Naive thymus-derived CD4-positive, alpha-beta T cell (primary cell): ENCODE measurements at regions of chr19 and their contacts with region 1.

Region 1: DNA sequence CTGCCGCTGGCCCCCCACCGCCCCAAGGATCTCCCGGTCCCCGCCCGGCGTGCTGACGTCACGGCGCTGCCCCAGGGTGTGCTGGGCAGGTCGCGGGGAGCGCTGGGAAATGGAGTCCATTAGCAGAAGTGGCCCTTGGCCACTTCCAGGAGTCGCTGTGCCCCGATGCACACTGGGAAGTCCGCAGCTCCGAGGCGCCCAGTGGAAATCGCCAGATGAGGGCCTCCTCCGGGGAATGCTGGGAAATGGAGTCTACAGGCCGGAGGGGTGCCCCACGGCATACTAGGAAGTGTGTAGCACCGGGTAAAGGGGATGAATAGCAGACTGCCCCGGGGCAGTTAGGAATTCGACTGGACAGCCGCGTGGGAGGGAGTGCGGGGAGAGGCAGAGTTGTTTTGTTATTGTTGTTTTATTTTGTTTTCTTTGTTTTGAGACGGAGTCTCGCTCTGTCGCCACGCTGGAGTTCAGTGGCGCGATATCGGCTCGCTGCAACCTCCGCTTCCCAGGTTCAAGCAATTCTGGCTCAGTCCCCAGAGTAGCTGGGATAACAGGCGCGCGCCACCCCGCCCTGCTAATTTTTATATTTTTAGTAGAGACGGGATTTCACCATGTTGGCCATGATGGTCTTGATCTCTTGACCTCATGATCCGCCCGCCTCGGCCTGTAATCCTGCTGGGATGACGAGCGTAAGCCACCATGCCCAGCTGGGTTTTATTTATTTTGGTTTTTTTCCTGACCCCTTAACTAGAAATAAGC is at the start of gene PPP1R12C:
- DNase-seq: peak; percentile 88 to 97 (median 91)
- ATAC-seq: peak; percentile 95
- H3K4me3 ChIP-seq: peak within 1 kb of the TSS; percentile 97
- H3K4me3 Mint-ChIP-seq: peak within 1 kb of the TSS; percentile 96 to 100 (median 98)
- H3K27ac ChIP-seq: peak within 1 kb of the TSS; percentile 74
- H3K27ac Mint-ChIP-seq: peak within 1 kb of the TSS; percentile 91 to 96 (median 95)
- H3K4me1 ChIP-seq: peaks cover 12 to 19% of the 10 kb centered on the region in 2 donors
- H3K4me1 Mint-ChIP-seq: peaks cover 14 to 47% (median 36%) of the 10 kb centered on the region in 7 donors
- H3K27me3 ChIP-seq: no peaks in the 10 kb centered on the region
- H3K27me3 Mint-ChIP-seq: peaks cover 0 to 13% (median under 1%) of the 10 kb centered on the region in 5 donors
- total RNA-seq, gene PPP1R12C: 107 to 180 (median 144) TPM

Region 2: GRCh38 chr19:54102421-54103169 is 1015.2 kb before region 1 on chr19 and contains the start of gene NDUFA3:
- CTCF ChIA-PET with region 1: no interaction called
- POLR2A ChIA-PET with region 1: no interaction called
- intact Hi-C with region 1: loop called in 1 of 2 experiments (anchors 2 kb)
- DNase-seq: peak; percentile 95 to 99 (median 97)
- ATAC-seq: peak; percentile 99
- H3K4me3 ChIP-seq: peak within 1 kb of the TSS; percentile 72
- H3K4me3 Mint-ChIP-seq: peak within 1 kb of the TSS; percentile 87 to 99 (median 98)
- H3K27ac ChIP-seq: peak within 1 kb of the TSS; percentile 77
- H3K27ac Mint-ChIP-seq: peak within 1 kb of the TSS; percentile 85 to 98 (median 94)
- H3K4me1 ChIP-seq: peaks cover 0 to 6% of the 10 kb centered on the region in 2 donors
- H3K4me1 Mint-ChIP-seq: peaks cover 5 to 40% (median 24%) of the 10 kb centered on the region in 7 donors
- H3K27me3 ChIP-seq: no peaks in the 10 kb centered on the region
- H3K27me3 Mint-ChIP-seq: peaks cover 0 to 6% (median 0%) of the 10 kb centered on the region in 5 donors
- total RNA-seq, gene NDUFA3: 64.4 to 127 (median 117) TPM

Region 3: GRCh38 chr19:55062734-55063492 is 54.9 kb before region 1 on chr19 and contains the start of gene RDH13:
- CTCF ChIA-PET with region 1: no interaction called
- POLR2A ChIA-PET with region 1: interaction called, 4 read pairs
- intact Hi-C with region 1: loop called (anchors 1 kb)
- DNase-seq: peak; percentile 95 to 99 (median 97)
- ATAC-seq: peak; percentile 100
- H3K4me3 ChIP-seq: peak within 1 kb of the TSS; percentile 74
- H3K4me3 Mint-ChIP-seq: peak within 1 kb of the TSS; percentile 65 to 94 (median 86)
- H3K27ac ChIP-seq: peak within 1 kb of the TSS; percentile 78
- H3K27ac Mint-ChIP-seq: peak within 1 kb of the TSS; percentile 31 to 88 (median 77)
- H3K4me1 ChIP-seq: peaks cover 7 to 10% of the 10 kb centered on the region in 2 donors
- H3K4me1 Mint-ChIP-seq: peaks cover 0 to 33% (median 18%) of the 10 kb centered on the region in 7 donors
- H3K27me3 ChIP-seq: peaks cover 0 to 9% of the 10 kb centered on the region in 2 donors
- H3K27me3 Mint-ChIP-seq: peaks cover 19 to 36% (median 22%) of the 10 kb centered on the region in 5 donors
- total RNA-seq, gene RDH13: 14.5 to 24.8 (median 19.0) TPM

Region 4: GRCh38 chr19:55258828-55259539 is 141.2 kb after region 1 on chr19 and contains the start of gene PPP6R1:
- CTCF ChIA-PET with region 1: no interaction called
- POLR2A ChIA-PET with region 1: interaction called, 8 read pairs
- intact Hi-C with region 1: loop called (anchors 1 to 5 kb)
- DNase-seq: peak; percentile 92 to 97 (median 96)
- ATAC-seq: peak; percentile 91
- H3K4me3 ChIP-seq: peak within 1 kb of the TSS; percentile 87
- H3K4me3 Mint-ChIP-seq: peak within 1 kb of the TSS; percentile 89 to 99 (median 98)
- H3K27ac ChIP-seq: peak within 1 kb of the TSS; percentile 94
- H3K27ac Mint-ChIP-seq: peak within 1 kb of the TSS; percentile 97 to 99 (median 98)
- H3K4me1 ChIP-seq: peaks cover 31 to 43% of the 10 kb centered on the region in 2 donors
- H3K4me1 Mint-ChIP-seq: peaks cover 36 to 45% (median 41%) of the 10 kb centered on the region in 7 donors
- H3K27me3 ChIP-seq: no peaks in the 10 kb centered on the region
- H3K27me3 Mint-ChIP-seq: no peaks in the 10 kb centered on the region
- total RNA-seq, gene PPP6R1: 151 to 223 (median 168) TPM

Region 5: DNA sequence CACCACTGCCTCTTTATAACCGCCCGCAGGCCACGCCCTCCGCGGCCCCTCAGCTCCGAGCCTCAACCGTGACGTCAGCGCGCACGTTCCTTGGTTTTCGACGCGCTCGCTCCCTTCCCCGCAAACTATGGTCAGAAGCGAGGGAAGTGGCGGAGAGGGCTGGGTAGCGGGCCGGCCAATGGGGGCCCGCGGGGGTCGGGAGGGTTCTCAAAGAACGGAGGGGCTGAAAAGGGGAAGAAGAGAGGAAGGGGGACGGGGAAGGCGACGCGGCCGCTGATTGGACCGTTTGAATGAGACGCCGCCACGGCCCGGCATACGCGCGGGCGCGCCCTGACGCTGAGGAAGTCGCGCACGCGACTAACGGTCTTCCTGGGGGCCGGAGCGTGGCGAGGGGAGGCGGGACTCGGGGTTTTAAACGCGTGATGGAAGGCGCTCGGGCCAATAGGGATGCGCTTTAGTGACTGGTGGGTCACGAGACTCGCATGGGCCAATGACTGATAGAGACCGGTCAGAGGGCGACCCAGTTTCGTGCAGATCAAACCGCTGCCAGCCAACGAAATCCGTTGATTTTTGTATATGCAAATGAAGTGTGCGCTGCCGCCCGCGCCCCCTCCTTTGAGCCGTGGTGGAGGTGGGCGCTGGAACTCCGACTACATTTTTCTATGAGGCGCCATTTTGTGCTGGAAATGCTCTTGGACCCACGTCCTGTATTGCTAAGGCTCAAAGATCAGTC is 290.2 kb after region 1 on chr19:
- CTCF ChIA-PET with region 1: no interaction called
- POLR2A ChIA-PET with region 1: interaction called, 4 read pairs
- intact Hi-C with region 1: loop called in 1 of 2 experiments (anchors 1 kb)
- DNase-seq: peak; percentile 94 to 99 (median 97)
- ATAC-seq: peak; percentile 93
- H3K4me3 ChIP-seq: peak overlapping the region; percentile 89
- H3K4me3 Mint-ChIP-seq: peak overlapping the region; percentile 86 to 97 (median 92)
- H3K27ac ChIP-seq: peak overlapping the region; percentile 96
- H3K27ac Mint-ChIP-seq: peak overlapping the region; percentile 93 to 100 (median 99)
- H3K4me1 ChIP-seq: peaks cover 17 to 24% of the 10 kb centered on the region in 2 donors
- H3K4me1 Mint-ChIP-seq: peaks cover 21 to 36% (median 26%) of the 10 kb centered on the region in 7 donors
- H3K27me3 ChIP-seq: no peaks in the 10 kb centered on the region
- H3K27me3 Mint-ChIP-seq: peaks cover 0 to 12% (median 0%) of the 10 kb centered on the region in 5 donors

Region 6: DNA sequence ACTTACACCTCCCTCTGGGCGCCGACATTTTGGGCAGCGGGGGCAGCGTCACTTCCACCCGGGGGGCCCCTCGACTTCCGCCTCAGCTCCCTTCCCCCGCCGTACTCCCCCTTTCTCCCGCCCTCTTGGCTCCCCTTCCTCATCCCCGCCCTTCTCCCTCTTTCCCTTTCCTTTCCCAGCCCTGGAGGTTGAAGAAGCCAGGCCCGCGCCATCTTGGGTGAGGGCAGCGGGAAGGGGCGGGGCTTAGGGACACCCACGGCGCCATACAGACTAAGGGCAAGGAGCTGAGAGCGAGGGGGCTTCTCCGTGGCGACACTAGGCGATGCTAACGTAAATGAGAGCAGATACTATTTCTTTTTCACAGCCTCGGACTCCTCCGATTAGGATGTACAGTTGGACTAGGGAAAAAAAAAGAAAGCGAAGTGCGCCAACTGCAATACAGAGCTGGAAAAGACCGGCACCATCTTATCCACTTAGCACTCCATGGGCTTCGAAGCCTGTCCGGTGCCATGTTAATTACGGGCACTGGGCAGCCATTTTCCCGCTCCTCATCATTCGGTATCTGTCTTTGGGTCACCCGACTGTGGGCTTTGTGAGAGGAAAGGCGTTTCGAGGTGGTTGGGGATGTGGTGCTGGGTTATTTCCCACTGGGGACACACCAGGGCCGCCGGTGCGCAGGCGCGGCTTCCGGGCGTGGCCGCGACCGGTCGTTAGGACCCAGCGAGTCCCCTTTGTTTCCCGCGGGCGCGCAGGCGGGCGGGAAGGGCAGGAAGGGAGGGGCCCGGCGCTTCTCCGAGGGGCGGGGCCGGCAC is 481.9 kb after region 1 on chr19 and contains the start of gene FIZ1:
- CTCF ChIA-PET with region 1: no interaction called
- POLR2A ChIA-PET with region 1: no interaction called
- intact Hi-C with region 1: loop called (anchors 1 kb)
- DNase-seq: peak; percentile 88 to 97 (median 95)
- ATAC-seq: peak; percentile 84
- H3K4me3 ChIP-seq: peak within 1 kb of the TSS; percentile 93
- H3K4me3 Mint-ChIP-seq: peak within 1 kb of the TSS; percentile 90 to 100 (median 99)
- H3K27ac ChIP-seq: peak within 1 kb of the TSS; percentile 93
- H3K27ac Mint-ChIP-seq: peak within 1 kb of the TSS; percentile 97 to 100 (median 99)
- H3K4me1 ChIP-seq: peaks cover 0 to 15% of the 10 kb centered on the region in 2 donors
- H3K4me1 Mint-ChIP-seq: peaks cover 20 to 36% (median 30%) of the 10 kb centered on the region in 7 donors
- H3K27me3 ChIP-seq: no peaks in the 10 kb centered on the region
- H3K27me3 Mint-ChIP-seq: no peaks in the 10 kb centered on the region
- total RNA-seq, gene FIZ1: 9.4 to 32.0 (median 16.1) TPM

Region 7: DNA sequence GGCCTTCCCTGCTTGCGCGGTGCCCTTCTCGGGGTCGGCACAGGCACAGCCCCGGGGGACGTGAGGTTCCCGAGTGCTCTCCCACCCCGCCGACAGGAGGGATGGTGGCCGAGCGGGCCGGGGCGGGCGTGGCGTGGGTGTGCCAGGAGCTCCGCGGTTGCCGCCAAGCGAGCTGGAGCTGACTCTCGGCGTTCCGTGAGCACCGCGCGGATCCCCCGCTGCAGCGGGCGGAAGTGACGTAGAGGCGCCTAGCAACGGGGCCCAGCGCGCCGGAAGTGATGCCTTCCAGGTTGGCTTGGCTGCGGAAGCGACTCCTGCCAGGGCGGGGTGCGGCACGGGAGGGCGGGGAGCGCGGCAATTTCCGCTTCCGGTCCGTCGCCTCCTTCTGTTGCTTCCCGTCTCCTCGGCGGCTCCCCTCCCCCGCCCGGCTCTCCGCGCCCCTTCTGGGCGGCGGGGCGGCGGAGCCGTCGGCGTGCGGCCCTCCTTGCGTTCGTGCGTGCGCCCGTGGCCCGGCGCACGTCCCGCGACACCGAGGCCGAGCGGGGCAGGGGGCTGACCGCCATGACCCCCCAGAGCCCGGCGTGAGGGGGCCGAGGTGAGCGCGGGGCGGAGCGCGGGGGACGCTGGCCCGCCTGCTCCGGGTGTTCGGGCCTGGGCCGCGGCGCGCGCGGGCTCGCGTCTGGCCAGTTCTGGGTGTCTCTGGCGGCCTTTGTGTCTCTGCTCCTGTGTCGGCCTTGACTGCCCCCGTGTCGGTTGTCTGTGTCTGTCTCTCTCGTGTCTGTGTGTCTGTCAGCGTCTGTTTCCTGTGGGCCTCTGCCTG is 557.2 kb after region 1 on chr19 and contains the start of gene EPN1:
- CTCF ChIA-PET with region 1: no interaction called
- POLR2A ChIA-PET with region 1: no interaction called
- intact Hi-C with region 1: loop called in 1 of 2 experiments (anchors 1 kb)
- DNase-seq: peak; percentile 88 to 98 (median 96)
- ATAC-seq: peak; percentile 93
- H3K4me3 ChIP-seq: peak within 1 kb of the TSS; percentile 72
- H3K4me3 Mint-ChIP-seq: peak within 1 kb of the TSS; percentile 89 to 99 (median 97)
- H3K27ac ChIP-seq: peak within 1 kb of the TSS; percentile 84
- H3K27ac Mint-ChIP-seq: peak within 1 kb of the TSS; percentile 90 to 99 (median 96)
- H3K4me1 ChIP-seq: peaks cover 26 to 28% of the 10 kb centered on the region in 2 donors
- H3K4me1 Mint-ChIP-seq: peaks cover 49 to 72% (median 58%) of the 10 kb centered on the region in 7 donors
- H3K27me3 ChIP-seq: no peaks in the 10 kb centered on the region
- H3K27me3 Mint-ChIP-seq: no peaks in the 10 kb centered on the region
- total RNA-seq, gene EPN1: 45.2 to 67.1 (median 52.2) TPM